Activated B cell treated with CpG ODN at 0.5 μM for 24 hours (primary cell): ENCODE measurements at regions of chr17 and their contacts with region 1.

Region 1: DNA sequence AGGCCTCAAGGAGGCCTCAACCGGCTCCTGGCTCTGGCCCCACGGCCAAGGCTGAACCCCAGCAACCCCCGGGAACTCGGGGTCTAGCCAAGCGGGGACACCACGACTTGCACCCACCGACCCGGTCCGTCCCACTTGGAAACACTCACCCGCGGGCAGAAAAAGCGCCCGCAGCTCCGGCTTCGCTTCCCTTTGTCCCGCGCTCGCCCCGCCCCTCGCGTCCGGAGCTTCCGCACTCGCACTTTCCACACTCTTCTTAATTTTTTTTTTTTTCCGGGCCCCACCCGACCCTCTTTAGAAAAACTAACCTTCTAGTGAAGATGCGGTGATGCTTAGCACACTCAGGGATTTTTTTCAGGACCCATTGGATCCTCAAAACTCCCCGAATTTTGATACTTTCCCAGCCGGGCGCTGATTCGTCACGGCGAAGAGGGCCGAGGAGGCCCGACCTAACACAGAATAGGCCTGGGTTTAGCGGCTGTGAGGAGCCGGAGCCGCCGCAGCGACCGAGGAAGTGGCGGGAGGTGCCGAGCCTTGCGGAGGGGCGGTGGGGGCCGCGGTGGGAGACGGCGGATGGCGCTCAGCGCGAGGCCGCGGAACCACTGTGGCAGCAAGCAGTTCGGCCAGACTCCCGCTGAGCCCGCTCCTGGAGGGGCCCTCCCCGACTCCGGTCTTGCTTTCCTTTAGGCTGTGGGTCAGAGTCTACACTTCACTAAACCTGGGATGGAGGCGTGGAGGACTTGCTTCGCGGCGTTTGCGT is at the start of gene SMARCE1:
- DNase-seq: peak; percentile 75
- ATAC-seq: peak; percentile 84
- H3K4me3 Mint-ChIP-seq: peak within 1 kb of the TSS; percentile 98
- H3K27ac Mint-ChIP-seq: peak within 1 kb of the TSS; percentile 99
- H3K4me1 Mint-ChIP-seq: peaks cover 48% of the 10 kb centered on the region
- H3K27me3 Mint-ChIP-seq: no peaks in the 10 kb centered on the region
- CTCF ChIP-seq: no peak
- total RNA-seq, gene SMARCE1: 140 TPM in 2 replicates

Region 2: DNA sequence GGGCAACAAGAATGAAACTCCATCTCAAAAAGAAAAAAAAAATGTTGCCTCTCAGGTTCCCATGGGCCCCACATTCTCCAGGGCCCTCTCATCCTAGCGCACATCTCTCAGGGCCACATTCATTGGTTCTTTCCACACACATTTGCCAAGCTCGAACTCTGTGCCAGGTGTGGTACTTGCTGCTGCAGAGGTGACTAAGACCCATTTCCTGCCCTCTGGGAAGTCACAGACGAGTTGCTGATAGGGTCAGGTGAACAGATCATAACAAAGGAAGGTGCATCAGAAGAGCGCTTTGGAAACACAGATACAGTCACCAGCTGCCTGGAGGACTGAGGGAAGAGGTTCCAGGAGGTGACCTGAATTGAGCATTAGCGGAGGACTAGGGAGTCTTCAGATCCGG is 684.0 kb before region 1 on chr17:
- CTCF ChIA-PET with region 1: no interaction called
- POLR2A ChIA-PET with region 1: interaction called, 10 read pairs
- intact Hi-C with region 1: no loop called
- DNase-seq: no peak
- ATAC-seq: no peak
- H3K4me3 Mint-ChIP-seq: no peak overlapping the region
- H3K27ac Mint-ChIP-seq: no peak overlapping the region
- H3K4me1 Mint-ChIP-seq: peaks cover 13% of the 10 kb centered on the region
- H3K27me3 Mint-ChIP-seq: peaks cover 11% of the 10 kb centered on the region
- CTCF ChIP-seq: no peak

Region 3: GRCh38 chr17:40378966-40379365 is 268.8 kb before region 1 on chr17:
- CTCF ChIA-PET with region 1: no interaction called
- POLR2A ChIA-PET with region 1: no interaction called
- intact Hi-C with region 1: no loop called
- DNase-seq: no peak
- ATAC-seq: no peak
- H3K4me3 Mint-ChIP-seq: no peak overlapping the region
- H3K27ac Mint-ChIP-seq: no peak overlapping the region
- H3K4me1 Mint-ChIP-seq: peaks cover 3% of the 10 kb centered on the region
- H3K27me3 Mint-ChIP-seq: peaks cover 3% of the 10 kb centered on the region
- CTCF ChIP-seq: no peak

Region 4: GRCh38 chr17:40564883-40565768 is 82.7 kb before region 1 on chr17 and contains the start of gene CCR7:
- CTCF ChIA-PET with region 1: interaction called, 3 read pairs
- POLR2A ChIA-PET with region 1: interaction called, 40 read pairs
- intact Hi-C with region 1: no loop called
- DNase-seq: peak; percentile 78
- ATAC-seq: peak; percentile 66
- H3K4me3 Mint-ChIP-seq: peak within 1 kb of the TSS; percentile 89
- H3K27ac Mint-ChIP-seq: peak within 1 kb of the TSS; percentile 99
- H3K4me1 Mint-ChIP-seq: peaks cover 74% of the 10 kb centered on the region
- H3K27me3 Mint-ChIP-seq: no peaks in the 10 kb centered on the region
- CTCF ChIP-seq: no peak
- total RNA-seq, gene CCR7: 572 and 573 TPM in 2 replicates

Region 5: GRCh38 chr17:40602775-40603551 is 44.8 kb before region 1 on chr17:
- CTCF ChIA-PET with region 1: no interaction called
- POLR2A ChIA-PET with region 1: no interaction called
- intact Hi-C with region 1: no loop called
- DNase-seq: no peak
- ATAC-seq: no peak
- H3K4me3 Mint-ChIP-seq: no peak overlapping the region
- H3K27ac Mint-ChIP-seq: peak overlapping the region; percentile 70
- H3K4me1 Mint-ChIP-seq: peaks cover 75% of the 10 kb centered on the region
- H3K27me3 Mint-ChIP-seq: no peaks in the 10 kb centered on the region
- CTCF ChIP-seq: no peak

Region 6: DNA sequence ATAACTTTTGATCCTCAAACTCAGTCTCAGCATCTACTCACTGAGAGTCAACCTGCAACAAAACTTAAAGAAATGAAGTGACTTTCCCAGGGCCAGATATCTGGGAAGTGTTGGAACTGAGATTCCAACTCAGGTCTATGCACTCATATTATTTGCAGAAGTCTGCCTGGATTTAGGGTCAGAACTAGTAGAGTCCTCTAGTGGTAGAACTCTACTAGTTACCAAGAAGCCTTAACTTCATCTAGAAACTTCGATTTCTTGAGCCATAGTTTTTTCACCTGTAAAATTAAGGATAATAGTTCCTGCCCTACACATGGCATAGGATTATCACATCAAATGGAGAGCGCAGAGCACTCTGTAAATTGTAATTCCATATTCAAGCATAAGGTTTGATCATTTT is 79.1 kb after region 1 on chr17:
- CTCF ChIA-PET with region 1: no interaction called
- POLR2A ChIA-PET with region 1: interaction called, 8 read pairs
- intact Hi-C with region 1: loop called (anchors 1 kb)
- DNase-seq: no peak
- ATAC-seq: no peak
- H3K4me3 Mint-ChIP-seq: peak overlapping the region; percentile 12
- H3K27ac Mint-ChIP-seq: peak overlapping the region; percentile 74
- H3K4me1 Mint-ChIP-seq: peaks cover 26% of the 10 kb centered on the region
- H3K27me3 Mint-ChIP-seq: no peaks in the 10 kb centered on the region
- CTCF ChIP-seq: no peak

Region 7: GRCh38 chr17:40818733-40819527 is 171.1 kb after region 1 on chr17:
- CTCF ChIA-PET with region 1: no interaction called
- POLR2A ChIA-PET with region 1: interaction called, 4 read pairs
- intact Hi-C with region 1: loop called (anchors 1 kb)
- DNase-seq: peak; percentile 79
- ATAC-seq: peak; percentile 89
- H3K4me3 Mint-ChIP-seq: peak overlapping the region; percentile 87
- H3K27ac Mint-ChIP-seq: peak overlapping the region; percentile 83
- H3K4me1 Mint-ChIP-seq: peaks cover 10% of the 10 kb centered on the region
- H3K27me3 Mint-ChIP-seq: peaks cover 14% of the 10 kb centered on the region
- CTCF ChIP-seq: no peak